ENCODE measurements at regions of chr3 and their contacts with region 1.

Region 1: DNA sequence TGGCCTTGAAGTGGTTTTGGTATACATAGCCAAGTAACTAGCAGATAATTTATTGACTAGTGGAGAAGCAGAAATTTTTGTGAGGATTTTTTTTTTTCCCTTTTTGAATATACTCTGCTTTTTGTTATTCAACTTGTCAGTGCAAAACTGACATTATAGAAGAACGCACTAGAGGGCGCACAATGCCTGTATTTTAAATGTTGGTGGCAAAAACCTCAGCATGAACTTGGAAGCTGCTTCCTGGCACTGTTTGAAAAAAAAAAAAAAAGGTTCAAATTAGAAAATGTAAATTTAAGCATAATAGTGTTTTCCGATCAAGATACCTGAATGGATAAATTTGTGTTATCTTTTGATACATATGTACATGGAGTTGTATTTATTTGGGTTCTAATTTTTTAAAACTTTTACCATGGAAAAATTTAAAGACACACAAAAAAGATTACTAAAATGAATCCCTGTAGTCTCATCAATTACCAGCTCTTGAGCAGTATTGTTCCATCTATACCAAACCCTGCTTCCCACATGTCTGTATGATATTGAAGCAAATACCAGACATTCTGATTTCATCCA is 56.0 kb downstream of the SLC25A26 start:
- DNase-seq: peak; percentile 88
- H3K4me3 ChIP-seq: no peak overlapping the region
- H3K27ac ChIP-seq: no peak overlapping the region
- H3K4me1 ChIP-seq: no peaks in the 10 kb centered on the region
- H3K27me3 ChIP-seq: no peaks in the 10 kb centered on the region
- CTCF ChIP-seq: peak; percentile 38 to 41
- POLR2A ChIP-seq: no peak

Region 2: DNA sequence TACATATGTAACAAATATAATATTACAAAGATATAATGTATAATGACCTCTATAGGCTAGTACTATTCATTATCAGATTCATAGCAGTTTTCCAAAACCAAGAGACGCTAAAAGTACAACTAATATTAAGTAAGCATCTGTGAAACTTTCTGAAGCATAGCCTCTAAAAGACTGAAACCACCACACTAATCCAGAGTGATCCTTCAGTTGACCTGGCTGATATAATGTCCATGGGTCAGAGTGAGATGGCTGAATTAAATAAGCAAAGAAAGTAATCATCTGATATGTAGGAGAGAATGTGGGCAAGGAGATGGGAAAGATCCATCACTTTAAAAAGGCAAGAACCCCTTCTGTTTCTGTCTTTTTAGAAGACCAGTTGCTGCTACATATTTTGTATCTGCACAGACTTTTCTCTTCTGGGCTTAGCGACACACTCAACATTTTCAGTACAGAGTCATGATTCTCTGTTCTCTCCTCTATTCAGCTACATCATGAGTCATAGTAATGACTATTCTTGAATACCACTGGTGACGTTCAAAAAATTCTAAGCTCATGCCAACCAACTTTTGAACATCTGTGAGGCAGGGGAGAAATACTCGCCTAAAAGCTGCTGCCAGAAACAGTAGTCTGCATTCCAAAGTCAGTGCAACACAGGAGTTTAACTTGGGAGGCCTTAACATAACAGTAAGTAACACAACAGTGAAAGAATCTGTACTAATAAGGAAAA is 387.6 kb before region 1 on chr3:
- CTCF ChIA-PET with region 1: no interaction called
- POLR2A ChIA-PET with region 1: no interaction called
- dilution Hi-C with region 1: no loop called
- intact Hi-C with region 1: no loop called
- DNase-seq: peak; percentile 56
- H3K4me3 ChIP-seq: no peak overlapping the region
- H3K27ac ChIP-seq: no peak overlapping the region
- H3K4me1 ChIP-seq: peaks cover 9% of the 10 kb centered on the region
- H3K27me3 ChIP-seq: no peaks in the 10 kb centered on the region
- CTCF ChIP-seq: no peak
- POLR2A ChIP-seq: no peak

Region 3: DNA sequence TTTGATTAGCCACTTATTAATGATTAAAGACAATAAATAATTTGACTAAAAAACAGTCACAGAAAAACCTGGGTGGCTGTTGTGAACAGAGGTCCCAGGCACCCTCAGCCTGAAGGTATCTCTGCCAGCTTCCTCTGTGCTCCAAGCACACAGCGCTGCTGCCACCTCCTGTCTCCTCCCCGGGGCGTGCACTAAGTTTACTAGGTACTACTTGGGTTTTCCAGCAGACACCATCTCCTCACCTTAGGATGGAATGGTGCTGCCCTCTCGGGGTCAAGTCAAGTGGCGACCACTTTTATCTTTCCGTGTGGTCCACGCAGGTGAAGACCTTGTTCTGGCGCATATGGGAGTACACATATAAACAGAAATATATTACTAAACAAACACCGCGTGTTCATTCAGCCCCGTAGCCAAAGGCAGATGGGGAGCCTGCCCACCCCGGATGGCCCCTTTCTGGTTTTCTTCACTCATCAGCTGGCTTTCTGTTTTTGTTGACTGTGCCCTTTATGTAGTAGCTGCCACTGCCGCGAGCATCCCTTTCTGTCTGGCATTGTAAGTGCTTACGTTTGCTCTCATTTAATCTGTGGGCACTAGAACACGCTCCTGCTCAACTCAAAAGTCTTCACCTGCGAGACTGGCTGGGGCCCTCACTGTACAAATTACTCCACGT is 96.0 kb after region 1 on chr3:
- CTCF ChIA-PET with region 1: interaction called, 43 read pairs
- POLR2A ChIA-PET with region 1: no interaction called
- dilution Hi-C with region 1: no loop called
- intact Hi-C with region 1: loop called (anchors 1 kb)
- DNase-seq: peak; percentile 29
- H3K4me3 ChIP-seq: no peak overlapping the region
- H3K27ac ChIP-seq: no peak overlapping the region
- H3K4me1 ChIP-seq: peaks cover 10% of the 10 kb centered on the region
- H3K27me3 ChIP-seq: no peaks in the 10 kb centered on the region
- CTCF ChIP-seq: peak in 1 of 2 donors; percentile 18
- POLR2A ChIP-seq: no peak

Region 4: GRCh38 chr3:66394019-66394752 is 117.4 kb after region 1 on chr3:
- CTCF ChIA-PET with region 1: interaction called, 25 read pairs
- POLR2A ChIA-PET with region 1: no interaction called
- dilution Hi-C with region 1: no loop called
- intact Hi-C with region 1: loop called (anchors 5 kb)
- DNase-seq: peak; percentile 37
- H3K4me3 ChIP-seq: no peak overlapping the region
- H3K27ac ChIP-seq: peak overlapping the region; percentile 50
- H3K4me1 ChIP-seq: peaks cover 28% of the 10 kb centered on the region
- H3K27me3 ChIP-seq: no peaks in the 10 kb centered on the region
- CTCF ChIP-seq: no peak
- POLR2A ChIP-seq: no peak

Region 5: GRCh38 chr3:66500576-66501482 is 224.0 kb after region 1 on chr3 and contains the start of gene LRIG1:
- CTCF ChIA-PET with region 1: interaction called, 3 read pairs
- POLR2A ChIA-PET with region 1: no interaction called
- dilution Hi-C with region 1: no loop called
- intact Hi-C with region 1: loop called (anchors 1 kb)
- DNase-seq: peak; percentile 99
- H3K4me3 ChIP-seq: peak within 1 kb of the TSS; percentile 70 to 93 (median 90)
- H3K27ac ChIP-seq: peak within 1 kb of the TSS; percentile 69
- H3K4me1 ChIP-seq: peaks cover 14% of the 10 kb centered on the region
- H3K27me3 ChIP-seq: peaks cover 13 to 18% of the 10 kb centered on the region in 2 experiments
- CTCF ChIP-seq: peak in 1 of 2 donors; percentile 48
- POLR2A ChIP-seq: peak; percentile 80
- total RNA-seq, gene LRIG1: 42.0 and 52.2 TPM in 2 replicates

Region 6: DNA sequence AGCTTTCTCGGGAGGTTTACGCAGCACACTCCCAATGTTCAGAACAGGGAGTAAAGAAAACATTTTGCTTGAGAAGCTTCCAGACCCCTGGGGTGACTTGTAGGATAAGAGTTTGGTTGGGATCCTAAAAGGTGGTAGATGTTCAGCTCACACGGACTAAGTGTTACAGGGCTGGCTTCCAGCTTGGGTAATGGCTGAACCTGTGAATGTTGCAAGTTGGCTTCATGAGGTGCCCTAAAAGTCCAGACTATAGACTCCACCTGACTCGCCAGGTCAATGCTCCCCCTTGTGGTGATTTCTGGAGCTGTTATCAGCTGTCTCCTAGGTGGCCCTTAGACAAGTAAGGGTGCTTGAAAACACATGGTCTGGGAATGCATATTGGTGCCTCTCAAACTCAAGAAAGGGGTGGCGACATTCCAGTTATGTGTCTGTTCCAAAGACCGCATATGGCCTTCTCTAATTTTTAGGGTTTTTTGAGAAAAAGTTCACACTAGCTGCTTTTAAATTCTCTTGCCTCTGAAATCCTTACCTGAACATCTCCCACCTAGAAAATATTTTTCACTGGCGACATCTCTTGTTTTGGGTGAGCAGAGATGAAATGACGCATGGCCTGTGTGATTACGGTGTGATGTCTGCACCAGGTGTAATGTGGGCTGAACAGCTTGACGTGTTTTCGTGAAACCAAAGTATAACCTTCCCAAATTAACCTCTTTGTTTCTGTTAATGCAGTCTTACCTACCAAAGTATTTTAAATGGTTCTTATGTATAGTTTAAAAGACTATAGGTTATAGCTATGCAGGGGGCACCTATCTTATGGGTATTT is 545.6 kb after region 1 on chr3:
- CTCF ChIA-PET with region 1: interaction called, 108 read pairs
- POLR2A ChIA-PET with region 1: no interaction called
- dilution Hi-C with region 1: no loop called
- intact Hi-C with region 1: loop called (anchors 1 kb)
- DNase-seq: peak; percentile 74
- H3K4me3 ChIP-seq: no peak overlapping the region
- H3K27ac ChIP-seq: no peak overlapping the region
- H3K4me1 ChIP-seq: no peaks in the 10 kb centered on the region
- H3K27me3 ChIP-seq: peaks cover 14 to 16% of the 10 kb centered on the region in 2 experiments
- CTCF ChIP-seq: peak; percentile 74 to 83
- POLR2A ChIP-seq: no peak